A673 (cell line): ENCODE measurements at regions of chr6 and their contacts with region 1.

Region 1: DNA sequence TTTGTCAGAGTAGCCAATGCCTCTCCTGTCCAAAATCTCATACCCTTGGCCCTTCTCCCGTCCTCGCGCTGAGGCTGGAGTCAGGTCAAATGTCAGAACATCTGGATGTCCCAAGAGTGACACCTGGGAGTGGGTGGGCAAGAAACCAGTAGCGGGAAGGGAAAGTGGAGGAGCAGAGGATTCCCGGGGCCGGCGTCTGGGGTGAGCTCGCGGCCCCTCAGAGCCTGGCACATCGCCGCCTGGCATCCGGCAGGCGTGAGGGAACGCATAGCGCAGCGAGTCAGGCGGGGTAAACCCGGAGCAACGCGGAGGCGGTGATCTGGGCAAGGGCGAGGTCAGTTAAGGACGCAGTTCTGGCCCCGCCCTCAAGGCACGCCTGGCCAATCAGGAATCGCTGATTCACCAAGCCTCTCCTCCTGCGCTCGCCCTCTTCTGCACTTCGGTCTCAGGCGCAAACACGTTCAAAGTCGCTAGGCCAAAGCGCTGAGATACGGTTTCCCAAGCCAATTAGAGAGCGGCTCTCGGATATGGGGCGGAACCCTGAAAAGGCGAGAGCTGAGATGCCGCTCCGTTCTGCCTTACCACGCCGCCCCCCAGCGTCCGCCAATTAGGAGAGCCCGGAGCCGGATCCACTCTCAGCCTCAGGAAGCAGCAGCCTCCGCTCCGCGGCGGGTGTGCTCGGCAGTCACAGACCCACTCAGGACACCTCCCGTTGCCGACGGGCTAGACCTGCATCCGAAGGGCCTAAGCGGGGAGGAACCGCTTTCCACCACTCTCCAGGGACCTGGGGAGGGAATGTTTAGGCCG is 22.5 kb downstream of the VPS52 start:
- DNase-seq: peak; percentile 99
- H3K4me3 ChIP-seq: peak overlapping the region; percentile 59
- H3K27ac ChIP-seq: peak overlapping the region; percentile 94
- H3K4me1 ChIP-seq: peaks cover 16% of the 10 kb centered on the region
- H3K27me3 ChIP-seq: no peaks in the 10 kb centered on the region
- CTCF ChIP-seq: no peak

Region 2: DNA sequence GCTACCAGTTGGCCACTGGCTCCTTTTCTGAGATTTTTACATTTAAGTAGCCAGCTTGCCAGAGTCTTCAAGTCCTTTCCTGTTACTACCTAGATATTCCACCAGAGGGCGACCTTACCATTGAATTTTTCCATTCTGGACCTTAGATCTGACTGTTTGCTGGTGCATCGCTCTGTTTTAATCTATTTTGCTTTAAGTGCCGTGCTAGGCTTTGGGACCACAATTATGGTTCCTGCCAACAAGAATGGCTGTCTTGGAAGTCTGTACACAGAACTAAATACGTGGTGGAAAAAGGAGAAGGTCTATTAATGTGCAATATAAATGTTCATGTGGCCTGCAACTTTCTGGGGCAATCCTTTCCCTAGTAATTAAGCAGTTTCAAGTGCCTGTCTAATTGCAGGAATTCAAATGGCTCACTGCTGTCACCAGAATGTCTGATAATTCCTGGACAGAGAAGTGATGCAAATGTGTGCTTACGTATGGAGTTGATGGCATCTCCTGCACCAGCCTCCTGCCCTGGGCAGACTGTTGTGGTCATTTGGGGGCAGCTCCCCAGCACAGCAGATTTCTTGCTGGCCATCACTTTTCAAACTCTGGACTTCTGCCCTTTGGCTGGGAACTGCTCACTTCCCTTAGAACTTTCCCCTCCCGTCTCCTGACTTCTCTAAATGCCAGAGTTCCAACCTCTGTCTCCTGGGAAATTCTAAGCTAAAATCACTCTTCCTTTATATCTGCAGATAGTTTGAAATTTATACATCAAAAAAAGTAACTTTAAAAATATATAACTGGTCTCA is 234.1 kb before region 1 on chr6:
- CTCF ChIA-PET with region 1: interaction called, 8 read pairs
- POLR2A ChIA-PET with region 1: no interaction called
- intact Hi-C with region 1: loop called (anchors 1 kb)
- DNase-seq: peak; percentile 88
- H3K4me3 ChIP-seq: no peak overlapping the region
- H3K27ac ChIP-seq: no peak overlapping the region
- H3K4me1 ChIP-seq: no peaks in the 10 kb centered on the region
- H3K27me3 ChIP-seq: peaks cover 24% of the 10 kb centered on the region
- CTCF ChIP-seq: peak; percentile 76

Region 3: DNA sequence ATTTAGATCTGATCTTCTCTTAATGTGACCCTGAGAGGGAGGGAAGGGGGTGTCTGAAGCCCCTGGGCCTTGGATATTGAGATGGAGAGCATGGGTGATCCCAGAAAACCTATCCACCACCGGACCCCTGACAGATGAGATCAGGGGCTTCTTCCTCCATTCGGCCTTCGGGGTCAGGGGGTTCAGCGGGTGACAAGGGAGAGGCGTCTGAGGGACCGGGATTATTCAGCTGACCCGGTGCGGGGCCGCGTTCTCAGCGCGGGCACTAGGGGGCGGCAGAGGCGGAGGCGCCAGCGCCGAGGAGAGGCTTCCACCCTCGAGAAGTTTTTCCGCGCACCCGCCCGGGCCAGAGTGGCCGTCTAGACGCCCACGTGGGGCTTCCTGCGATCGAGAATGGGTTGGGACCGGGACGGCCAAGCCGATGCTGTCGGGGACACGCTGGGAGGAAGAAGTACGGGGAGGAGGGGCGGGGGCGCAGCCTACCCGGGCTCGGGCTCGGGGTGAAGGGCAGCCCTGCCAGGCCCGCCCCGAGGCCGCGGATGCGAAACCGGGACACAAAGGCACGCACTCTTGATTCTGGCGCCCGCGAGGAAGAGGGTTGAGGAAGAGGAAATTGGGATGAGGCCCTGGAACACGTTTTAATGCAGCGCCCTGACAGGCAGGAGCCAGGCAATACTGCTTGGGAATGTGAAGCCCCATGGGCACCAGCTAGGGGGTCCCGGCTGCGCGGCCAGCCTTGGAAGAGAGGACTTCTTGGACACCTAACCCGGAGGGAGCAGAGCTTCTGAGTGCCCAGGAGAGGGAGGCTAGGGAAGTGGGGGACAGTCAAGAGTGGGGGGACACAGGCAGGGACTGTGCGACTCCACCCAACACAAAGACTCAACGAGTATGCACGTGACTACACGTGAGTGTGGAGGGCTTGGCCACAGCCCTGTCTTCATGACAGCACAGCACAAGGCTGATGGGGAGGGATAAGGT is 87.5 kb before region 1 on chr6:
- CTCF ChIA-PET with region 1: interaction called, 7 read pairs
- POLR2A ChIA-PET with region 1: no interaction called
- intact Hi-C with region 1: loop called (anchors 1 kb)
- DNase-seq: peak; percentile 81
- H3K4me3 ChIP-seq: peak overlapping the region; percentile 54
- H3K27ac ChIP-seq: peak overlapping the region; percentile 40
- H3K4me1 ChIP-seq: peaks cover 7% of the 10 kb centered on the region
- H3K27me3 ChIP-seq: no peaks in the 10 kb centered on the region
- CTCF ChIP-seq: peak; percentile 96

Region 4: GRCh38 chr6:33208091-33208967 is 40.8 kb before region 1 on chr6 and contains the start of gene RING1:
- CTCF ChIA-PET with region 1: interaction called, 4 read pairs
- POLR2A ChIA-PET with region 1: no interaction called
- intact Hi-C with region 1: loop called (anchors 2 kb)
- DNase-seq: peak; percentile 85
- H3K4me3 ChIP-seq: peak within 1 kb of the TSS; percentile 96
- H3K27ac ChIP-seq: peak within 1 kb of the TSS; percentile 98
- H3K4me1 ChIP-seq: peaks cover 42% of the 10 kb centered on the region
- H3K27me3 ChIP-seq: no peaks in the 10 kb centered on the region
- CTCF ChIP-seq: no peak
- total RNA-seq, gene RING1: 43.3 and 47.5 TPM in 2 replicates

Region 5: DNA sequence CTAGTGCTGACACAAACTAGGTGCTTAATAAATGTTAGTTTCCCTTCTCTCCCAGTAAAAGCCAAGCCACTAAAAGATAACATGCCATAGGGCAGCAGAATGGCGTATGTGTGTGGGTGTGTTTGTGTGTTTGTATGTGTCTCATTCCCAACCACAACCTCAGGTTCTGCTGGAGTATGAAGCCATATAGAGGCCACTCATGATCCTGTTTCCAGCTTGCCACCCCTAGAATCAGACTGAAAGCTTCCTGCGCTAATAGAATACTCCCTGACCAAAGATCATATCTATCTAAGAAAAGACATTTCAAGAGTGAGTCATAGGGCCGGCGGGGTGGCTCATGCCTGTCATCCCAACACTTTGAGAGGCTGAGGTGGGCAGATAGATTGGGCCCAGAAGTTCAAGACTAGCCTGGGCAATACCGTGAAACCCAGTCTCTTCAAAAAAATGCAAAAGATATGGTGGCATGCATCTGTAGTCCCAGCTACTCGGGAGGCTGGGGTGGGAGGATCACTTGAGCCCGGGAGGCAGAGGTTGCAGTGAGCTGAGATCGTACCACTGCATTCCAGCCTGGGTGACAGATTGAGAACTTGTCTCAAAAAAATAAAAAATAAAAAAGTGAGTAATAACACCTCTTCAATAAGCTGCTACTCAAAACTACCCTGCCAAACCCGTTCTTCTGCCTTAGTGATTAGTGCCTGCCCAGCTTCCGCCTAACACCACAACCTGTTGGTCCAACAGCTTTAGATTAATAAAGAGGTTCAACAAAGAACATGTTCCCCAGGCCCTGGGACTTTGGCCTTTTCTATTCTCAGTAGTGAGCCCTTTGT is 1496.4 kb after region 1 on chr6:
- CTCF ChIA-PET with region 1: no interaction called
- POLR2A ChIA-PET with region 1: interaction called, 13 read pairs
- intact Hi-C with region 1: no loop called
- DNase-seq: no peak
- H3K4me3 ChIP-seq: no peak overlapping the region
- H3K27ac ChIP-seq: no peak overlapping the region
- H3K4me1 ChIP-seq: no peaks in the 10 kb centered on the region
- H3K27me3 ChIP-seq: no peaks in the 10 kb centered on the region
- CTCF ChIP-seq: no peak